Pancreas (tissue), 10 donors: ENCODE measurements at regions of chr3 and their contacts with region 1.

Region 1: DNA sequence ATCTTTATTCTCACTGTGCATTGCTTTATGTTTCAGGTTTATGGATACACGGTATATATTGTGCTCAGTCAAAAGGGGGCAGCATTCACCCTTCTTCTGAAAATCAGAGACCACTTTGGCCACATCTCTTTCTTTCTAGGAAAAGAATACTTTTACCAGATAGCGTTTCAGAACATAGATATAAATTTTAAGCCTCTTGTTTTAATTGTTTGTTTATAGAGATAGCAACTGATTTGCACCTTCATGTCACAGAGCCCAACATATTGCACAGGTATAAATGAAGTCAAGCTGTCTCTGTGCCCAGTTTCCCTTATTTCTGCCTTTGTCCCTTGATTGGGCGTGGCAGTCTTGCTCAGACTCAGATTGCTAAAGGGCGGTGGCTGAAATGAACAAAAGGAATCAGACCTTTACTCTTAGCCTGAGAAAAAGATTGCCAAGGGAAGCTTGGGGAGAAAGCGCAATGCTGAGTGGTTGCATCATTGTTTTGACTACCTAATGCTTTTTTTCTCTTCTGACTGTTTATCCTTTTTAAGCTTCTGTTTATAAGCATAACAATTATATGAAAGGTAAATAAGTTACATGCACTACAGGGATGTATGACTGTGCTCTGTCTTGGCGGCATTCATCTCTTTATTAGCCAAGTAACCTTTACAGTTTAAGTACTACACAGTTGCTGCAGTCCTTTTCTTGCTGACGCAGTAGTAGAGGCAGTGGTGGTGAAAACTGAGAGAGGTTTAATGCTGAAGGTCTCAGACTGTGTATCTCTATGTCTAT is 70.8 kb upstream of the ZBTB20 start:
- DNase-seq: no peak
- ATAC-seq: peak in 3 of 4 donors; percentile 65 to 88 (median 81)
- H3K4me3 ChIP-seq: no peak overlapping the region
- H3K27ac ChIP-seq: no peak overlapping the region
- H3K4me1 ChIP-seq: no peaks in the 10 kb centered on the region
- H3K27me3 ChIP-seq: no peaks in the 10 kb centered on the region
- CTCF ChIP-seq: peak in 3 of 4 donors; percentile 20 to 31 (median 29)

Region 2: GRCh38 chr3:115019900-115020299 is 198.0 kb before region 1 on chr3:
- intact Hi-C with region 1: no loop called
- DNase-seq: no peak
- ATAC-seq: peak in 1 of 4 donors; percentile 28
- H3K4me3 ChIP-seq: no peak overlapping the region
- H3K27ac ChIP-seq: no peak overlapping the region
- H3K4me1 ChIP-seq: peaks cover 0 to 6% (median 0%) of the 10 kb centered on the region in 3 donors
- H3K27me3 ChIP-seq: no peaks in the 10 kb centered on the region
- CTCF ChIP-seq: no peak

Region 3: DNA sequence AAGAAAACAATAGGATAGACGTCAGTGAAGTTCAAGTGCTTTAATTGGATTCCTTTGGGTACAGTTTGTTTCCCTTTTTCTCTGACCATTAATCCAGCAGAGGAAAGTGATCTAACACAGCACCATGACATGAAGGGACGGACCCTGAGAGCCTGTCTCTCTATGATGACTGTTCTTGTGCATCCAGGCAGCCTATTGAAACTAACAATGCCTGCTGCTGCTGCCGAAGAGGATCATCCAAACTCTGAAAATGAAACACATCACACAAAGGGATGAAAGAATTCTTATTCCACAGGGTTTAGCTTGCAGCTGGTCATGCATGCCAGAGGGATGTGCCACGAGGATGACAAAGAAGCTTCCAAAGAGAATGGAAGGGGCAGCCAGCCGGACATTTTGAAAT is 146.3 kb before region 1 on chr3:
- intact Hi-C with region 1: no loop called
- DNase-seq: no peak
- ATAC-seq: no peak
- H3K4me3 ChIP-seq: no peak overlapping the region
- H3K27ac ChIP-seq: no peak overlapping the region
- H3K4me1 ChIP-seq: peaks cover 0 to 13% (median 7%) of the 10 kb centered on the region in 3 donors
- H3K27me3 ChIP-seq: no peaks in the 10 kb centered on the region
- CTCF ChIP-seq: no peak

Region 4: GRCh38 chr3:115692887-115693524 is 475.1 kb after region 1 on chr3:
- intact Hi-C with region 1: loop called in 1 of 3 experiments (anchors 10 kb)
- DNase-seq: peak; percentile 42 to 78 (median 56)
- ATAC-seq: peak; percentile 95 to 100 (median 98)
- H3K4me3 ChIP-seq: no peak overlapping the region
- H3K27ac ChIP-seq: no peak overlapping the region
- H3K4me1 ChIP-seq: no peaks in the 10 kb centered on the region
- H3K27me3 ChIP-seq: no peaks in the 10 kb centered on the region
- CTCF ChIP-seq: peak; percentile 29 to 70 (median 64)